Activated B cell treated with CpG ODN at 0.5 μM for 24 hours (primary cell): ENCODE measurements at regions of chr18 and their contacts with region 1.

Region 1: GRCh38 chr18:13558124-13558523 is 168.2 kb downstream of the FAM210A start:
- DNase-seq: peak; percentile 56
- ATAC-seq: peak; percentile 60
- H3K4me3 Mint-ChIP-seq: peak overlapping the region; percentile 52
- H3K27ac Mint-ChIP-seq: peak overlapping the region; percentile 77
- H3K4me1 Mint-ChIP-seq: peaks cover 46% of the 10 kb centered on the region
- H3K27me3 Mint-ChIP-seq: no peaks in the 10 kb centered on the region
- CTCF ChIP-seq: peak; percentile 51

Region 2: DNA sequence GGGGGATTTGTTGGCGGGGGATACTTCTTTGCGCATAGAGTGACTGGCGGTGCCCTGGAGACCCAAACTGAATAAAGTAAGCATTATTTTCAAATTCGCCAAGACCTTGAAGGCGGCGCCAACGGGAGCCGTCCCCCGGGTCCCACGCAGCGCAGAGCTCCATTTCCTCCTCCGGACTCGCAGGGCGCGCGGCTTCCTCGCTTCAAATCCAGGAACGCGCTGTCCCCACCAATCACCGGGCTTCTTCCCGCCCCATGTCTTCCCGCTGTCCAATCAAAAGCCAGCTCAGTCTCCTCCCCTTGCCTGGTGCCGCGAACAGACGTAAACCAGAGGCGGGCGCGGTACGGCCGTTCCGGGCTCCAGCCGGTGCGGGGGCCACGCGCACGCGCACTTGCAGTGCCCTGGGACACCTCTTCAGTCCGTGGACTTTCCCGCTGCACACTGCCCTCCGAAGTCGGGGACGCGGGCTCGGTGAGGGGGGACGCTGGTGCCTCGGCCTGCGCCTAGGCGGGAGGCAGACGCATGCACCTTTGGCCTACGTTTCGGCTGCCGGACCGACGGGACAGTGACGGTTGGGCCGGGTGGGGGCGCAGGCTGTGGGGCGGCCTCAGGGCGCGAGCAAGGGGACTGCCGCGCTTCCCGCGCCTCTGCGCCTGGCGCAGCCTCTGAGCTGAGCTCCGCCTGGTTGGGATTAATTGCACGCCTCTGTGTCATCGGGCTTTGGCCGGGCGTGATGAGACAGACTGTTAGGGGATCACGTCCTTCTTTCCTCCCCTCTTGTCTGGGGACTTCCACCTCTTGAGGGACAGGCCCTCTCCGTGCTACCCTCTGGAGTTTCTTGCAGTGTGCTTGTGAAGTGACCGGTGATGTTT is 566.9 kb before region 1 on chr18 and contains the start of gene CEP192:
- CTCF ChIA-PET with region 1: no interaction called
- POLR2A ChIA-PET with region 1: no interaction called
- intact Hi-C with region 1: no loop called
- DNase-seq: peak; percentile 93
- ATAC-seq: peak; percentile 96
- H3K4me3 Mint-ChIP-seq: peak within 1 kb of the TSS; percentile 93
- H3K27ac Mint-ChIP-seq: peak within 1 kb of the TSS; percentile 94
- H3K4me1 Mint-ChIP-seq: peaks cover 32% of the 10 kb centered on the region
- H3K27me3 Mint-ChIP-seq: no peaks in the 10 kb centered on the region
- CTCF ChIP-seq: no peak
- total RNA-seq, gene CEP192: 33.6 and 34.2 TPM in 2 replicates

Region 3: GRCh38 chr18:13216092-13216582 is 342.0 kb before region 1 on chr18:
- CTCF ChIA-PET with region 1: interaction called, 20 read pairs
- POLR2A ChIA-PET with region 1: interaction called, 6 read pairs
- intact Hi-C with region 1: loop called (anchors 1 kb)
- DNase-seq: no peak
- ATAC-seq: peak; percentile 48
- H3K4me3 Mint-ChIP-seq: peak overlapping the region; percentile 79
- H3K27ac Mint-ChIP-seq: no peak overlapping the region
- H3K4me1 Mint-ChIP-seq: peaks cover 16% of the 10 kb centered on the region
- H3K27me3 Mint-ChIP-seq: peaks cover 49% of the 10 kb centered on the region
- CTCF ChIP-seq: no peak

Region 4: DNA sequence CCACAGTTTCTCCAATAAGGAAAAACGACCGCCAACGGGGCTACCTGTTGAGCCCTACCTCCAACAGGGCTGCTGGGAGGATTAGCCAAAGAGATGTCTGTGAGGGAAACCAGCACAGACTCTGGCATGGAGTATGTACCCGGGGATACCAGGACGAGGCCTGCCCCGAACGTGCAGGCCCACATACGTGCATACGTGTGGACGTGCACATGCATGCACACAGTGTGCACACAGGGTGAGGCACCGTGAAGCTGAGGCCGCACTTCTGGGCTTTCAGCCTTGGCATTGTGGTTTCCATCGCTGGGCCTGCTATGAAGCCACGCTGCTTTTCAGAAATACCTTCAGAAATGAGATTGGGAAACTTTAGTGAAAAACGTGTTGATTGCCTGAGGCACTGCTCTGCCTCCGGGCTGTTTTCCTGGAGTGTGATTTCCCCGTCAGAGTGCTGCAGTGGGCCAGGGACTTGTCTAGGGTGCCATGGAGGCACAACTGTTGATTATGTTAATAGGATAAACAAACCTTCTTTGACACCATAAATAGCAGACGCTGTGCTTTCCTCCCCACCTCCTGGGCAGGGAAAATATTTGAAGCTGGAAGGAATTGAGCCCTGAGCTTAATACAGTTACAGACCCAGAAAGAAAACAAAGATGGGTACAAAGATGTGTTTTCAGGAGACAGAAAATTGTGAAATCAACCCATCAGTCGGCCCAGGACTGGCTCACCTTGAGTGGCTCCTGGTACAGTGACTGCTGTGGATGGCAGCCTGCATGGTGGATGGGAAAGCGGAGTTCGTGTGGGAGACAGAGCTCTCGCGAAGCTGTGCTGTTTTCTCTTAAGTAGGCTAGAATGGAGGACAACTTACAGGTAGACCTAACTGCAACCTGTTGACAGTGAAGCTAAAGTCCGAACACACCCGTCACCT is 14.1 kb before region 1 on chr18:
- CTCF ChIA-PET with region 1: interaction called, 12 read pairs
- POLR2A ChIA-PET with region 1: interaction called, 7 read pairs
- intact Hi-C with region 1: no loop called
- DNase-seq: no peak
- ATAC-seq: no peak
- H3K4me3 Mint-ChIP-seq: no peak overlapping the region
- H3K27ac Mint-ChIP-seq: no peak overlapping the region
- H3K4me1 Mint-ChIP-seq: peaks cover 28% of the 10 kb centered on the region
- H3K27me3 Mint-ChIP-seq: no peaks in the 10 kb centered on the region
- CTCF ChIP-seq: no peak

Region 5: GRCh38 chr18:13585379-13586153 is 27.4 kb after region 1 on chr18:
- CTCF ChIA-PET with region 1: interaction called, 14 read pairs
- POLR2A ChIA-PET with region 1: interaction called, 151 read pairs
- intact Hi-C with region 1: loop called (anchors 1 kb)
- DNase-seq: no peak
- ATAC-seq: peak; percentile 80
- H3K4me3 Mint-ChIP-seq: peak overlapping the region; percentile 76
- H3K27ac Mint-ChIP-seq: peak overlapping the region; percentile 98
- H3K4me1 Mint-ChIP-seq: peaks cover 63% of the 10 kb centered on the region
- H3K27me3 Mint-ChIP-seq: no peaks in the 10 kb centered on the region
- CTCF ChIP-seq: no peak

Region 6: DNA sequence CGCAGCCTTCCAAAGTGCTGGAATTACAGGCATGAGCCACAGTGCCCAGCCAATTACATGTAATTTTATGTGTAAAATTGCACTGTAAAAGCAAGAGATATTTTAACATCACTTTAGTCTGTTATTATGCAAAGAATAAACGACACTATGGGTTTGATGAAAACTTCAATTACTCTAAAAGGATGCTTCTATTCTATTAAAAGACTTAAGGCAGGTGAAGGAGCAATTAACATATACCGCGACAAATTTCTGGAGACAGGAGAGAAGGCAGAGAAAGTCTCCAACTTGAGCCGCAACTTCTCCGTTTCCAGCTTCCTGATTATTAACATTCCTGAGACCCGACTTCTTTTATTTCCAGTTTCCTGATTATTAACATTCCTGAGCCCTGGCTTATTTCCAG is 114.5 kb after region 1 on chr18:
- CTCF ChIA-PET with region 1: no interaction called
- POLR2A ChIA-PET with region 1: no interaction called
- intact Hi-C with region 1: loop called (anchors 1 kb)
- DNase-seq: no peak
- ATAC-seq: no peak
- H3K4me3 Mint-ChIP-seq: no peak overlapping the region
- H3K27ac Mint-ChIP-seq: no peak overlapping the region
- H3K4me1 Mint-ChIP-seq: peaks cover 2% of the 10 kb centered on the region
- H3K27me3 Mint-ChIP-seq: no peaks in the 10 kb centered on the region
- CTCF ChIP-seq: no peak